Esophagus squamous epithelium (tissue), 5 donors: ENCODE measurements at regions of chrX and their contacts with region 1.

Region 1: GRCh38 chrX:68828740-68829552 is at the start of gene EFNB1:
- DNase-seq: peak; percentile 68
- H3K4me3 ChIP-seq: peak within 1 kb of the TSS; percentile 59 to 79 (median 72)
- H3K27ac ChIP-seq: peak within 1 kb of the TSS; percentile 89 to 92 (median 91)
- H3K4me1 ChIP-seq: peaks cover 0 to 41% (median 6%) of the 10 kb centered on the region in 3 donors
- H3K27me3 ChIP-seq: peaks cover 0 to 3% (median 0%) of the 10 kb centered on the region in 4 donors
- CTCF ChIP-seq: no peak
- POLR2A ChIP-seq: peak in 3 of 4 donors; percentile 84 to 93 (median 91)
- total RNA-seq, gene EFNB1: 40.4 to 53.4 (median 46.7) TPM

Region 2: DNA sequence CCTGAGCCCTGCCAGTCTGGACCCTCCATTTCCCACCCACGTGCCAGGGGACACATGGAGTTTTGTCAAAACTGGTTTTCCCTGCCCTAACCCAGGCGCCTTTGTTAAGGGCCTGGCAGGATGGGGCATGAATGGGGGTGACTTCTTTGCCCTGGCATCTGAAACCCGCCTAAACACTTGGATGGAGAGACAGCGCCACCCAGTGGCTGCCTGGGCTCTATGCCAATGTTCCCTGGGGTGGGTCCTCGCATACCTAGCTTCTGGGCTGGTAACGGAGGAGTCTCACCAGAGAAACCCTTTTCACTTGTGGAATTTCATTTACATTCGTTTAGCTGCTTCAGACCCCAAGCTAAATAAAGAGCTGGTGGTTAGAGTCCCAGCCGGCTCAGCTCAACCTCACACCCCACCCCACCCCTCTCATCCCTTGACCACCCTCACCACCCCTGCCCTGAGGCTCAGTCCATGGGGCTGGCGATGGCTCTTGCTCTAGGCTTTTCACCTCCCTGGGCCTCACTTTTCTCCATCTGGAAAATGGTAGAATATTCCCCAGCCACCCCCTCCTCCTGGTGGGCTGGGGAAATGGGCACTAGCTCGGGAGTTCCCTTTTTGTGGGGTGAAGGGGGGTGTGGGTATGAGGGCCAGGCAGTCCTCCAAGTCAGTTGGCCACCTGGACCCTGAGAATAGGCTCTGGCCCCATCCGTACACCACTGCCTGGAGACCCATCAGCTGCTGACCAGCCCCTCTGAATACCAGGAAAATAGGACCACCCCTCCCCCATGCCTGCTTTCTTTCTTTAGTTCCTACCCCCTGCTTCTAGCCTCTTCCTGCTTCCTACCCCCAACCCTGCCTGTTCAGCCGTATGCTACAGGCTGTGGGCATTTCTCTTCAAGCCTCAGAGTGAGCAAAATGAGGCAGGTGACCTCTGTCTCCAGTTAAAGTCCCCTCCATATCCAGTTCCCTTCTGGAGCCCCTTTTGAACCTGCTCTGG is 393.5 kb after region 1 on chrX:
- intact Hi-C with region 1: loop called (anchors 5 kb)
- DNase-seq: no peak
- H3K4me3 ChIP-seq: no peak overlapping the region
- H3K27ac ChIP-seq: no peak overlapping the region
- H3K4me1 ChIP-seq: peaks cover 4 to 9% (median 6%) of the 10 kb centered on the region in 3 donors
- H3K27me3 ChIP-seq: no peaks in the 10 kb centered on the region
- CTCF ChIP-seq: peak; percentile 36 to 81 (median 74)
- POLR2A ChIP-seq: no peak